IMR-90 (cell line): ENCODE measurements at regions of chr17 and their contacts with region 1.

Region 1: GRCh38 chr17:30906101-30906911 is at the start of gene TEFM:
- DNase-seq: peak; percentile 92
- ATAC-seq: peak; percentile 99
- H3K4me3 ChIP-seq: peak within 1 kb of the TSS; percentile 71
- H3K27ac ChIP-seq: peak within 1 kb of the TSS; percentile 79
- H3K4me1 ChIP-seq: peaks cover 4% of the 10 kb centered on the region; the same call in 1 of the 2 replicates
- H3K27me3 ChIP-seq: no peaks in the 10 kb centered on the region
- CTCF ChIP-seq: no peak
- POLR2A ChIP-seq: peak; percentile 81
- RAD21 ChIP-seq: peak; percentile 40
- total RNA-seq, gene TEFM: 13.8 and 17.8 TPM in 2 replicates

Region 2: DNA sequence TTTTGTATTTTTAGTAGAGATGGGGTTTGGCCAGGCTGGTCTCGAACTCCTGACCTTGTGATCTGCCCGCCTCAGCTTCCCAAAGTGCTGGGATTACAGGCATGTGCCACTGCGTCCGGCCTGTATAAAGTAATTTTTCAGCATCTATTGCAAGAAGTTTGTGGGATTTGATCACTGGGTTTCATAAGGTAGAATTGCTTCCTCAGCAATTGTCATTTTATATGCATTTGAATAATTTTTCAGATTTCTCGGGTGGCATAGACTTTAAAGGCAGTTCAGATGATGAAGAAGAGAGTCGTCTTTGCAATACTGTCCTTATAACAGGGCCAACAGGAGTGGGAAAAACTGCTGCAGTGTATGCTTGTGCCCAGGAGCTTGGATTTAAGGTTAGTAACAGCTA is 37.3 kb before region 1 on chr17:
- CTCF ChIA-PET with region 1: no interaction called
- POLR2A ChIA-PET with region 1: no interaction called
- dilution Hi-C with region 1: no loop called
- in situ Hi-C with region 1: no loop called
- intact Hi-C with region 1: no loop called
- DNase-seq: no peak
- ATAC-seq: no peak
- H3K4me3 ChIP-seq: no peak overlapping the region
- H3K27ac ChIP-seq: no peak overlapping the region
- H3K4me1 ChIP-seq: no peaks in the 10 kb centered on the region
- H3K27me3 ChIP-seq: no peaks in the 10 kb centered on the region
- CTCF ChIP-seq: no peak
- POLR2A ChIP-seq: no peak
- RAD21 ChIP-seq: no peak

Region 3: GRCh38 chr17:30970831-30971567 is 64.7 kb after region 1 on chr17 and contains the start of gene RNF135:
- CTCF ChIA-PET with region 1: no interaction called
- POLR2A ChIA-PET with region 1: no interaction called
- dilution Hi-C with region 1: no loop called
- in situ Hi-C with region 1: no loop called
- intact Hi-C with region 1: loop called (anchors 2 kb)
- DNase-seq: peak; percentile 82
- ATAC-seq: peak; percentile 99
- H3K4me3 ChIP-seq: peak within 1 kb of the TSS; percentile 53
- H3K27ac ChIP-seq: peak within 1 kb of the TSS; percentile 68
- H3K4me1 ChIP-seq: peaks cover 3% of the 10 kb centered on the region; the same call in 1 of the 2 replicates
- H3K27me3 ChIP-seq: no peaks in the 10 kb centered on the region
- CTCF ChIP-seq: peak; percentile 7; the same call in 1 of the 2 replicates
- POLR2A ChIP-seq: peak; percentile 77
- RAD21 ChIP-seq: no peak; the same call in 1 of the 2 replicates
- total RNA-seq, gene RNF135: 5.3 and 5.9 TPM in 2 replicates